ENCODE measurements at regions of chr7 and their contacts with region 1.

Region 1: DNA sequence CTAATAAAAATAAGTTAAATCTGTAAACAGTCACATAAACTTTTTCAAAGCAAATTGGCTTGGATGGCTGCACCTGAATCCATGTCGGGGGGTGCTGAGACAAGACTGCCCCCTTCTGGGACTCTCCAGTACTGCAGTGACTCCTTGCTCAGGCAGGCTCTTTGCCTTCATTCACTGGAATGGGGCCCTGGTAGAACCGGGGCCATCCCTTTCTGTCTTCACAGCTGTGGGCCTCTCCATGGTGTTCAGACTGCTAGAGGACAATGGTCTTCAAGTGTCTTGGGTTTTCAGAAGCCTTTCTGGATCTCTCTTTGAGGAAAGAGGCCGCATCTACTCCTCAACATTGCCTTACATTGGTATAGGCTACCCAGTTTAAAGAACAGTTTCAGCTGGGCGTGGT is 16.1 kb upstream of the IMPDH1 start:
- DNase-seq: no peak
- H3K4me3 ChIP-seq: no peak overlapping the region
- H3K27me3 ChIP-seq: no peaks in the 10 kb centered on the region
- CTCF ChIP-seq: peak; percentile 96

Region 2: GRCh38 chr7:127809261-127809702 is 616.6 kb before region 1 on chr7:
- CTCF ChIA-PET with region 1: no interaction called
- POLR2A ChIA-PET with region 1: no interaction called
- DNase-seq: peak; percentile 30
- H3K4me3 ChIP-seq: no peak overlapping the region
- H3K27me3 ChIP-seq: no peaks in the 10 kb centered on the region
- CTCF ChIP-seq: no peak

Region 3: GRCh38 chr7:128343554-128344430 is 82.1 kb before region 1 on chr7 and contains the start of gene RBM28:
- CTCF ChIA-PET with region 1: interaction called, 67 read pairs
- POLR2A ChIA-PET with region 1: no interaction called
- DNase-seq: peak; percentile 44
- H3K4me3 ChIP-seq: peak within 1 kb of the TSS; percentile 94
- H3K27me3 ChIP-seq: peaks cover 8% of the 10 kb centered on the region
- CTCF ChIP-seq: no peak
- polyA plus RNA-seq, gene RBM28: 14.8 and 16.1 TPM in 2 replicates

Region 4: GRCh38 chr7:128398016-128398840 is 27.6 kb before region 1 on chr7:
- CTCF ChIA-PET with region 1: interaction called, 197 read pairs
- POLR2A ChIA-PET with region 1: no interaction called
- DNase-seq: no peak
- H3K4me3 ChIP-seq: no peak overlapping the region
- H3K27me3 ChIP-seq: no peaks in the 10 kb centered on the region
- CTCF ChIP-seq: peak; percentile 94

Region 5: DNA sequence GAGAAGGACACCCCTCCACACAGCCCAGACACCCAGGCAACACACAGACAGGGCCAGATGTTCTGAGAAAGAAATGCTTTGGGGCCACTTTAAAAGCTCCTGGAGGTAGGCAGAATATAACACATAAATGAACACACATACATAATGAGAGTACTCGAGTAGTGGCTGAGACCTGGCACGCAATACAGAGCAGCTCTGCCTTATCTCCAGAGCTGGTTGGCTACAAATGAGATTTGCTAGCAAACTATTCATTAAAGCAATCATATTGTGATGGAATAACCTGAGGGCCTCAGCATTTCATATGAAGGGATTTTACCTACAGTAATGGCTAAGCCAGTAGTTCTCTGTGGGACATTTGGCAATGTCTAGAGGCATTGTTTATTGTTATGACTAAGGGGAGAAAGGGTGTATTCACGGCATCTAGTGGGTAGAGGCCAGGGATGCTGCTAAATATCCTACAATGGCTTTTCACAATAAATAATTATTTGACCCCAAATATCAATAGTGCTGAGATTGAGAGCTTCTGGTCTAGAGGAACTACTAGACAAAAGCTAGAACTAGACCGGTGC is 10.5 kb before region 1 on chr7:
- CTCF ChIA-PET with region 1: interaction called, 93 read pairs
- POLR2A ChIA-PET with region 1: no interaction called
- DNase-seq: no peak
- H3K4me3 ChIP-seq: no peak overlapping the region
- H3K27me3 ChIP-seq: peaks cover 14% of the 10 kb centered on the region
- CTCF ChIP-seq: no peak

Region 6: GRCh38 chr7:128443831-128444600 is 18.2 kb after region 1 on chr7:
- CTCF ChIA-PET with region 1: interaction called, 76 read pairs
- POLR2A ChIA-PET with region 1: no interaction called
- DNase-seq: no peak
- H3K4me3 ChIP-seq: no peak overlapping the region
- H3K27me3 ChIP-seq: no peaks in the 10 kb centered on the region; the same call in 1 of the 2 replicates
- CTCF ChIP-seq: no peak

Region 7: GRCh38 chr7:128462460-128462859 is 36.6 kb after region 1 on chr7:
- CTCF ChIA-PET with region 1: interaction called, 227 read pairs
- POLR2A ChIA-PET with region 1: interaction called, 6 read pairs
- DNase-seq: no peak
- H3K4me3 ChIP-seq: no peak overlapping the region
- H3K27me3 ChIP-seq: no peaks in the 10 kb centered on the region
- CTCF ChIP-seq: no peak